Activated CD4-positive, alpha-beta memory T cell treated with anti-CD3 and anti-CD28 coated beads for 36 hours (primary cell): ENCODE measurements at regions of chr2 and their contacts with region 1.

Region 1: DNA sequence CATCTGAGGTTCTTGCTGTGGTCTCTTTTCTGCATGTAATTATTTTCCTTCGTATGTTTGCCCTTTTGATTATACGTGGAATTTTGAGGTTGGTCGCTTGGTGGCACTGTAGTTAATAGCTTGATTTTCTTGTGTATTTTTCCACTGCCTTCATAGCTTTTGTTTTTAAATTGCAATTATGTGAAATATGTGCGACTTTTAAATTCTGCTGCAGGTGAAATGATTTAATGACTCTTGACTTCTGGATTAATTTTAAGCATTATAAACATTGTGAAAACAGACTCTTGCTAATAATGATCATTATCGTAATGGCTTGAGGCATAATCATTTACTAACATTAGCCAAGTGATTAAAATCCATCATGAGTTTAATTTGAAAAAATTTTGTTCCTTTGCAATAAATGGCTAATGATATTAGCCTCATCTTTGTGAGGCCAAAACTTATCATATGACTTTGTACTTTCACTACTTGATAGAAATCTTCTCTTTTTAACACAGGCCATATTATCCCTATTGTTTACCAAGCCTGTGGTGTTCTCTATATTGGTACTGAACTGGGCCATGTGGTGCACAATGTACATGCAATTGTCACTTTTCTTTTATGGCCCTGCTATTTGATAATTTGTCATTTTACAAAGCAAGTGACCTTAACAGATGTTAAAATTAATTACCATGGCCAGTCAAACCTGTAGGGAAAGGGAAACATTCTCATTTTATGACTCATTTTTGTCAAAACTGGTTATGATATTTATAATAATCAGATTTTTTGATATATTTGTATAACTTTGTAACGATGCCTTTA is 62.8 kb upstream of the NEUROD1 start:
- DNase-seq: peak; percentile 35
- H3K4me3 Mint-ChIP-seq: no peak overlapping the region
- H3K27ac Mint-ChIP-seq: no peak overlapping the region
- H3K4me1 Mint-ChIP-seq: peaks cover 4% of the 10 kb centered on the region
- H3K27me3 Mint-ChIP-seq: peaks cover 13% of the 10 kb centered on the region

Region 2: DNA sequence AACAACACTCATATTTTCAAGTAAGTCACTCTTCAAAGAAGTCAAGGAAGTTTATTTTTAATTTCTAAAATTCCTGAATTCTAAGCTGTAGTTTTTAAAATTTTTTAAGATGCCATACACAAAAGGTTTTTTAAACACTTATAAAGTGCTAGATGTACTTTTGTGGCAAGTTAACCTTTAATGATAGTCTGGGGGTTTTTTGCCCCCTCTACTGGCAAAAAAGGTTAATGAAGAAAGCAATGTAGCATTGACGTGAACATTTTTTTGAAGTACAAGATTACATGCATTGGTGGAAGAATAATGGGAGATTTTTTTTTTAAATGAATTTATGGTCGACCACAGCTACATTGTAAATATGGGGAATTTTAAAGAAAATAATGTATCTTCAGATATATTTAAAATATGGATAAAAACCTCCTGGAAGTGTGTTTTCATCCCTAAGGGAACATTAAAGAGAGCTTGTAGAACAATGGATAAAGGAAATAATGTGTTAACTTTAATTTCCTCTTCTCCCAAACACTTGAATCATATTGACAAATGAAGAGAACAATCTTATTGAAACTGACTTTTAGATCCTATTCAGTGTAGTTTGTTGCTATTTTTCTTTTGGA is 161.0 kb after region 1 on chr2:
- CTCF ChIA-PET with region 1: interaction called, 11 read pairs
- POLR2A ChIA-PET with region 1: no interaction called
- intact Hi-C with region 1: loop called (anchors 1 kb)
- DNase-seq: no peak
- H3K4me3 Mint-ChIP-seq: no peak overlapping the region
- H3K27ac Mint-ChIP-seq: no peak overlapping the region
- H3K4me1 Mint-ChIP-seq: peaks cover 13% of the 10 kb centered on the region
- H3K27me3 Mint-ChIP-seq: no peaks in the 10 kb centered on the region

Region 3: GRCh38 chr2:182077451-182078142 is 334.5 kb after region 1 on chr2:
- CTCF ChIA-PET with region 1: interaction called, 18 read pairs
- POLR2A ChIA-PET with region 1: no interaction called
- intact Hi-C with region 1: loop called (anchors 1 kb)
- DNase-seq: no peak
- H3K4me3 Mint-ChIP-seq: no peak overlapping the region
- H3K27ac Mint-ChIP-seq: no peak overlapping the region
- H3K4me1 Mint-ChIP-seq: no peaks in the 10 kb centered on the region
- H3K27me3 Mint-ChIP-seq: peaks cover 4% of the 10 kb centered on the region

Region 4: GRCh38 chr2:182650704-182651103 is 907.6 kb after region 1 on chr2:
- CTCF ChIA-PET with region 1: no interaction called
- POLR2A ChIA-PET with region 1: no interaction called
- intact Hi-C with region 1: loop called (anchors 10 kb)
- DNase-seq: no peak
- H3K4me3 Mint-ChIP-seq: no peak overlapping the region
- H3K27ac Mint-ChIP-seq: no peak overlapping the region
- H3K4me1 Mint-ChIP-seq: peaks cover 10% of the 10 kb centered on the region
- H3K27me3 Mint-ChIP-seq: peaks cover 3% of the 10 kb centered on the region